Activated T-helper 1 cell treated with anti-CD3 and anti-CD28 coated beads, Interleukin-12 subunit alpha, Interleukin-12 subunit beta, Interleukin-2, Interleukin-4 antibody, amounts not matched to agents 30 ng/mL and 10 ng/mL and 1 ng/mL, durations not matched to agents 14 hours and 24 hours and 36 hours (primary cell): ENCODE measurements at regions of chr9 and their contacts with region 1.

Region 1: GRCh38 chr9:124126571-124127289 is 115.2 kb downstream of the LHX2 start:
- DNase-seq: peak; percentile 61
- H3K4me3 Mint-ChIP-seq: no peak overlapping the region
- H3K27ac Mint-ChIP-seq: no peak overlapping the region
- H3K4me1 Mint-ChIP-seq: peaks cover 5% of the 10 kb centered on the region
- H3K27me3 Mint-ChIP-seq: peaks cover 8% of the 10 kb centered on the region

Region 2: DNA sequence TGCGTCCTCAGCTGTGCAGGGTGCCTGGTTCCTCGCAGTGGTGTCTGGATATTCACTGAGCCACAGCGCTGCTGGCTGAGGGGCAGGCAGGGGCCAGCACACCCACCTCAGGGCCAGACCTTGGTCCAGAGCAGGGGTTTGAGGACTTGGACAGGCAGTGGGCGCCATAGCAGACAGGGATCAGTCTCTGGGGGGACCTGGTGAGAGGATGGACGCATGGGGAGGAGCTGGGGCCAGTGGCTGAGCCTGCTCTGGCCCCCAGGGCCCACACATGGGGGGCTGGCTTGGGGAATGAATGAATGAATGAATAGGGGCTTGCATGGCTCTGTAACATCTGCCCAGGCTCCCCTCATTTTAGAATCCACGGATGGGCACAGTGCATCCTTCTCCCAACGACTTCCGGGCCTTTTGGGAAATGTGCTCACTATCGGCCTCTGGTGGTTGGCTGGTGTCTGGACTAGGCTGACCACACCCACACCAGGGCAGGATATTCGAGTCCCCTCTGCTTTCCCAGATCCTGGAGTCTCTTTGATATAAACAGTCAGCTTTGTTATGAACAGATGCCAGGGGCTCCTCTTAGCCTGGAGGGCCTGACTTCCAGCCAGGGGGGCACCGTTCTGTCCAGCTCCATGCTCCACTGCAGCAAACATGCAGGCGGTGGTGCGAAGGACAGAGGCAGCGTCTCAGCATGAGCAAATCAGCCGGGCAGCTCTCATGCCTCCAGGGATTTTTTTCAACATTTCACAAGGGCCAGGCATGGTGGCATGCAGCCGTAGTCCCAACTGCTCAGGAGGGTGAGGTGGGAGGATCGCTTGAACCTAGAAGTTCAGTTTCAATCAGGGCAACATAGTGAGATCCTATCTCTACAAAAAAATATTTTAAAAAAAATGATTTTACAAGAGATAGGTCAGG is 193.6 kb after region 1 on chr9:
- intact Hi-C with region 1: loop called (anchors 1 kb)
- DNase-seq: peak; percentile 12
- H3K4me3 Mint-ChIP-seq: no peak overlapping the region
- H3K27ac Mint-ChIP-seq: no peak overlapping the region
- H3K4me1 Mint-ChIP-seq: no peaks in the 10 kb centered on the region
- H3K27me3 Mint-ChIP-seq: peaks cover 2% of the 10 kb centered on the region

Region 3: DNA sequence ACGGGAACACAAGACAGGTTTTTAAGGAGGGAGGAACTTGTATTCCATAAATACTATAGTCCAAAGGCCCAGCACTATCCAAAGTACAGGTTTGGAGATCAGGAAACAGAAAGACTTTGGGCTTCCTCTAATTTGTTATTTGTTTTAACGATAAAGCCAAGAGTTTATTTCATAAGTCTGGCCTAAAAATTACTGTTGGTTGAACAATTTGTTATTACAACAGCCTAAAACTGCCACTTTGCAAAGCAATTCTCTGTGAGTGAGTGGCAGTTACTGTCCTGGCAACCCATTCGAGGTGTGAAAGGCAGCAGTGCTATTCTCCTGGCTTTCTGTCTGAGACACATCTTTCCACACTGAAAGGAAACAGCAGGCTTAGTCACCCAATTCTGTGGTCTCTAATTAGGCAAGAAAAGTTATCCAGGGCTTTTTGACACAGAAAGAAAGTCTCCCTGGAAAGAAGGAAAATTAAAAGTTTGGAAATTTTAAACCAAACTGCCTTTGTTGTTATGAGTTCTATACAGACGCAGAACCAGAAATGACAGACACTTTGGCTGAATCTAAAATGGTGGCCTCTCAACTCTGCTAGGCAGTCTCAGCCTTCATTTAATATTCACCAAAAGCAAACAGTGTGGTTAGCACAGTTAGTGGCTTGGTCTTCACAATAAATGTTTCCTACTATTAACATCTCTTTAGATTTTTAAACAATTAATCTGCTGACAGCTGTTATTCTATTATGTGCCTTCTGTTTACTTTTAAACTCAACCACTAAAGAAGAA is 254.6 kb after region 1 on chr9:
- intact Hi-C with region 1: loop called (anchors 2 kb)
- DNase-seq: no peak
- H3K4me3 Mint-ChIP-seq: no peak overlapping the region
- H3K27ac Mint-ChIP-seq: no peak overlapping the region
- H3K4me1 Mint-ChIP-seq: no peaks in the 10 kb centered on the region
- H3K27me3 Mint-ChIP-seq: no peaks in the 10 kb centered on the region

Region 4: GRCh38 chr9:124394596-124394995 is 267.9 kb after region 1 on chr9:
- intact Hi-C with region 1: loop called (anchors 1 kb)
- DNase-seq: no peak
- H3K4me3 Mint-ChIP-seq: no peak overlapping the region
- H3K27ac Mint-ChIP-seq: peak overlapping the region; percentile 69
- H3K4me1 Mint-ChIP-seq: peaks cover 34% of the 10 kb centered on the region
- H3K27me3 Mint-ChIP-seq: no peaks in the 10 kb centered on the region

Region 5: DNA sequence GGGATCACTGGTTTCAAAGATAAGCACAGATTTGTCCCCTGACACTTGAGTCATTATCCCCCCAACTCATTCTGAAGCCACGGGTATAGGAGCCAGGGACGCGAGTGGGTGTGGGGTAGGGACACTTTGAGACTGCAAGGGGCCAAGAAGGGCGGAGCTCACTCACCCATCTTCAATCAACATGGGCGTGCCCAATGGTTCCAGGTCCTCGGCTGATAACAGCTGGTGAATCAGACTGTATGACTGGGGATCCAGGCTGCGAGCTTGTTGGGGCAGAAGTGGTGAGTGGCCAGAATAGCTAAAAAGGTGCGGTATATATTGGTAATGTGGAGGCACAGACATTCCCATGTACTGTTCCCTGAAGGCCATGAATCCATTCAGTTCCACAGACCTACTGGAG is 411.2 kb after region 1 on chr9:
- intact Hi-C with region 1: loop called (anchors 5 kb)
- DNase-seq: no peak
- H3K4me3 Mint-ChIP-seq: no peak overlapping the region
- H3K27ac Mint-ChIP-seq: no peak overlapping the region
- H3K4me1 Mint-ChIP-seq: no peaks in the 10 kb centered on the region
- H3K27me3 Mint-ChIP-seq: peaks cover 2% of the 10 kb centered on the region